MCF 10A (cell line): ENCODE measurements at regions of chr12 and their contacts with region 1.

Region 1: DNA sequence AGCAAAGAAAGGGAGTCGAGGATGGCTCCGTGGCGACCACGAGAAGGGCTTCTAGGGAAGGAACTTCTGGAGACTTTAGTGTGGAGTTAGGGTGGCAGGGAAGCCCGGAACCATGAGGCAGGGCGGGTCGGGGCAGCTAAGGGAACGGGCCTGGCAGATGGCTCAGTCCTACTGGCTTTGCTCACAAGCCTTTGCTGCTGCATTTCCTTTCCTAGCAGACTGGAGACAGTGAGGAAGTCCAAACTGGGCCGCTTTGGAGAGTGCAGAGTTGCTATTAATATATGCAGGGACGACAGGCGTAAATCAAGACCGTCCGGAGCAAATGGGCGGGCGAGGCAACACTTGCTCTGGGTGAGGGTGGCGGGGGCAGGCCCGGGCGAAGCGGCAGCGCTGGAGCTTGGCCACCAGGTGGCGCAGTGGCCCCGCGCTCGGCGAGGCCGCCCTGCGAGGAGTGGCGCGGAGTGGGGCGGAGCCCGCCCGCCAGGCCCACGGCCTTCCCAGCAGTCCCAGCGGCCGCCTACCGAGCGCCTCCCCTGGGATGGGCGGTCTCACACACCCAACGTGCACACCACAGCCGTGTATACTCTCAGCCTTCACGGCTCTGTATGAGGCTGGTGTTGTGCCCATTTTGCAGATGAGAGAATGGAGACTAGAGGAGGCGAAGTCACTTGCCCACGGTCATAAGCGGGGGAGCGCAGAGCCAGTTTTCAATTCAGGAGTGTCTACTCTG is 24.4 kb upstream of the LRTM2 start:
- DNase-seq: peak; percentile 84
- H3K4me3 Mint-ChIP-seq: peak overlapping the region; percentile 74
- H3K27ac Mint-ChIP-seq: no peak overlapping the region
- H3K4me1 Mint-ChIP-seq: peaks cover 11% of the 10 kb centered on the region
- H3K27me3 Mint-ChIP-seq: no peaks in the 10 kb centered on the region
- CTCF ChIP-seq: peak; percentile 92

Region 2: GRCh38 chr12:1644534-1645438 is 151.2 kb before region 1 on chr12:
- CTCF ChIA-PET with region 1: interaction called, 341 read pairs
- POLR2A ChIA-PET with region 1: interaction called, 5 read pairs
- intact Hi-C with region 1: no loop called
- DNase-seq: peak; percentile 32
- H3K4me3 Mint-ChIP-seq: no peak overlapping the region
- H3K27ac Mint-ChIP-seq: no peak overlapping the region
- H3K4me1 Mint-ChIP-seq: no peaks in the 10 kb centered on the region
- H3K27me3 Mint-ChIP-seq: no peaks in the 10 kb centered on the region
- CTCF ChIP-seq: no peak

Region 3: DNA sequence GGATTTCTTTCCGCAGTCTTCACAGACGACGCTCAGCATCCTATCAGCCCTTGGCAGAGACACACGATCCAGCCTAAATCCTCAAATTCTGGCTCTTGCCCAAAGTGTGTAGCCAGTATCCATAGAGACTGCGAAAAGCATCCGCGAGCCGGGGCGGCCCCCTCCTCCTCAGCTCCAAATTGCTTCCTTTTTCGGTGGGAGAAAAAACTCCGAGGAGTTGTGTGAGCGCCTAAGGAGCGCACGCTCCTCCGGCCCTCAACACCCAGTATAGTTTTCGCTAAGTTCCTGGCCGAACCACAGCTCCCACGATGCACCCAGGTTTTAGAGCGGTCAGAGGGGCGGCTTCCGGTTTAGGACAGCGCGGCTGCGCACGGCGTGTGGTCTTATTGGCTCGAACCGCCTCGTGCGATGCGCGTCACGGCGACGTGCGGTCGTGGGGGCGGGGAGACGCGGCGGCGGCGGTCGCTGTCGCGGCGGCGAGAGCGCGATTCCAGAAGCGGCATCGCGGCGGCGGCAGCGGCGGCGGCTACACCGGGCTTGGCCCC is 105.3 kb before region 1 on chr12 and contains the start of gene ADIPOR2:
- CTCF ChIA-PET with region 1: interaction called, 23 read pairs
- POLR2A ChIA-PET with region 1: interaction called, 3 read pairs
- intact Hi-C with region 1: loop called (anchors 1 kb)
- DNase-seq: peak; percentile 97
- H3K4me3 Mint-ChIP-seq: peak within 1 kb of the TSS; percentile 80
- H3K27ac Mint-ChIP-seq: peak within 1 kb of the TSS; percentile 98
- H3K4me1 Mint-ChIP-seq: peaks cover 8% of the 10 kb centered on the region
- H3K27me3 Mint-ChIP-seq: no peaks in the 10 kb centered on the region
- CTCF ChIP-seq: no peak
- total RNA-seq, gene ADIPOR2: 50.4 and 58.5 TPM in 2 replicates

Region 4: DNA sequence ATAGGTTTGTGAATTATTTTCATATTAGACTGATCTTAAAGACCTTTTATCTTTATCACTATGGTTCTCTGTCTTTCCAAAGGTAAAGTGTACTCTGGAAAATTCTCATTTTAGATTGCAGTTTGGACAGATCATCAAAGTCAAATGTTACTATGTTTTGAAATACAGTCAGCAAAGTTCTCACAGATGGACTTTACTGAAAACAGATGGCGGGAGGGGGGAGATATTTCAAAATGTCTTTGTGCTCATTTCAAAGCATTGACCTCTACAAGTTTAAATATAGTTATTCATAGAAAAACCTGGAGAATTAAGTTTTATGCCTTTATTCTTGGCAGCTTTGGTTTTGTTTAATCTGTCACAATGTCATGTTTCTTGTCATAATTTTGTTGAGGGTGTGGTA is 27.3 kb before region 1 on chr12:
- CTCF ChIA-PET with region 1: interaction called, 13 read pairs
- POLR2A ChIA-PET with region 1: interaction called, 3 read pairs
- intact Hi-C with region 1: no loop called
- DNase-seq: no peak
- H3K4me3 Mint-ChIP-seq: no peak overlapping the region
- H3K27ac Mint-ChIP-seq: no peak overlapping the region
- H3K4me1 Mint-ChIP-seq: peaks cover 15% of the 10 kb centered on the region
- H3K27me3 Mint-ChIP-seq: no peaks in the 10 kb centered on the region
- CTCF ChIP-seq: no peak

Region 5: GRCh38 chr12:1781772-1782171 is 14.2 kb before region 1 on chr12:
- CTCF ChIA-PET with region 1: interaction called, 23 read pairs
- POLR2A ChIA-PET with region 1: interaction called, 3 read pairs
- intact Hi-C with region 1: no loop called
- DNase-seq: no peak
- H3K4me3 Mint-ChIP-seq: no peak overlapping the region
- H3K27ac Mint-ChIP-seq: no peak overlapping the region
- H3K4me1 Mint-ChIP-seq: peaks cover 28% of the 10 kb centered on the region
- H3K27me3 Mint-ChIP-seq: no peaks in the 10 kb centered on the region
- CTCF ChIP-seq: no peak

Region 6: DNA sequence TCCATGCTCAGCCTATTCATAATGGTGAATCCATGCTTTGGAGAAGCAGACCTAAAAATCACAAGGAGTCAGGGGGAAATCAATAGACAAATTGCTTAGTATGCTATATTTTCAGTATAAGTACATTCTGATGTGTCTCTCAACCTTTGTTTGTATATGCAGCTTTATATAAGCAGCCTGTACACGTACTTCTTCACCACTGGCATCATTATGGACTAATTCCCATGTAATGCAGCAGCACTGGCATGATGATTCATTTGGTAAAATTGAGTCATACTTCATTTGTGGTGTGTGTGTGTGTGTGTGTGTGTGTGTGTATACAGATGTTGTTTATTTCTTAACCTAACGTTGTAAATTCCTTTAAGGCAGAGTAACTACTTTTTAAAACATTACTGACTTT is 197.4 kb after region 1 on chr12:
- CTCF ChIA-PET with region 1: no interaction called
- POLR2A ChIA-PET with region 1: no interaction called
- intact Hi-C with region 1: no loop called
- DNase-seq: peak; percentile 83
- H3K4me3 Mint-ChIP-seq: no peak overlapping the region
- H3K27ac Mint-ChIP-seq: no peak overlapping the region
- H3K4me1 Mint-ChIP-seq: peaks cover 10% of the 10 kb centered on the region
- H3K27me3 Mint-ChIP-seq: no peaks in the 10 kb centered on the region
- CTCF ChIP-seq: no peak

Region 7: DNA sequence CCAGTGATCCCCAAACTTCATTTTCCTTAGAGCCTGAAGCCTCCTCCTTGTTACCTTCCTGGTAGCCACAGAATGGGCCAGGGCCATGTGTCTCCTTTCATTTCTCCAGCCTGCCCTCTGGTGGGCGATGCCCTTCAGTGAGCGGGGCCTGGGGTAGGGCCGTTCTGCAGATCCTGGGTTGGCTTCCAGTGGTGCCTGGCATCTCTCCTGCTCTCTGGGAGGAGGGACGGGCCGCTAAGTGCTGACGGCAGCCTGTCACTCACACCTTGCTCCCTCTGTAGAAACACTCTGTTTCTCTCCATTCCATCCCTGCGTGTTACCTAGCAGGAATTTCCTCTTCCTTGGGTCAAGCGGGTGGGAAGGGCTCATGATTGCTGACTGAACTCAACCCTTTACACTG is 488.9 kb after region 1 on chr12:
- CTCF ChIA-PET with region 1: interaction called, 3 read pairs
- POLR2A ChIA-PET with region 1: no interaction called
- intact Hi-C with region 1: loop called (anchors 5 kb)
- DNase-seq: peak; percentile 78
- H3K4me3 Mint-ChIP-seq: no peak overlapping the region
- H3K27ac Mint-ChIP-seq: no peak overlapping the region
- H3K4me1 Mint-ChIP-seq: no peaks in the 10 kb centered on the region
- H3K27me3 Mint-ChIP-seq: no peaks in the 10 kb centered on the region
- CTCF ChIP-seq: peak; percentile 70